A549 (cell line): ENCODE measurements at regions of chr11 and their contacts with region 1.

Region 1: GRCh38 chr11:36478700-36479329 is 31.3 kb downstream of the TRAF6 start:
- DNase-seq: peak; percentile 35 to 60
- ATAC-seq: peak; percentile 91 to 92
- H3K4me3 ChIP-seq: no peak overlapping the region
- H3K27ac ChIP-seq: no peak overlapping the region
- H3K4me1 ChIP-seq: no peaks in the 10 kb centered on the region
- CTCF ChIP-seq: peak; percentile 79
- EP300 ChIP-seq: no peak
- POLR2A ChIP-seq: no peak
- RAD21 ChIP-seq: peak; percentile 91

Region 2: GRCh38 chr11:36131721-36132397 is 347.0 kb before region 1 on chr11:
- CTCF ChIA-PET with region 1: interaction called, 10 read pairs
- POLR2A ChIA-PET with region 1: no interaction called
- DNase-seq: peak in 1 of 2 experiments; percentile 41
- ATAC-seq: peak; percentile 70 to 86; a peak in 3 of 6 replicates
- H3K4me3 ChIP-seq: no peak overlapping the region
- H3K27ac ChIP-seq: no peak overlapping the region
- H3K4me1 ChIP-seq: peaks cover 4% of the 10 kb centered on the region; the same call in 1 of the 3 replicates
- CTCF ChIP-seq: peak; percentile 71
- EP300 ChIP-seq: no peak
- POLR2A ChIP-seq: no peak
- RAD21 ChIP-seq: peak; percentile 66 to 72

Region 3: GRCh38 chr11:36265793-36266628 is 212.8 kb before region 1 on chr11:
- CTCF ChIA-PET with region 1: interaction called, 21 read pairs
- POLR2A ChIA-PET with region 1: interaction called, 4 read pairs
- DNase-seq: peak; percentile 55 to 62
- ATAC-seq: peak; percentile 75 to 93
- H3K4me3 ChIP-seq: no peak overlapping the region
- H3K27ac ChIP-seq: no peak overlapping the region
- H3K4me1 ChIP-seq: no peaks in the 10 kb centered on the region
- CTCF ChIP-seq: peak; percentile 86
- EP300 ChIP-seq: no peak
- POLR2A ChIP-seq: no peak
- RAD21 ChIP-seq: peak; percentile 93

Region 4: DNA sequence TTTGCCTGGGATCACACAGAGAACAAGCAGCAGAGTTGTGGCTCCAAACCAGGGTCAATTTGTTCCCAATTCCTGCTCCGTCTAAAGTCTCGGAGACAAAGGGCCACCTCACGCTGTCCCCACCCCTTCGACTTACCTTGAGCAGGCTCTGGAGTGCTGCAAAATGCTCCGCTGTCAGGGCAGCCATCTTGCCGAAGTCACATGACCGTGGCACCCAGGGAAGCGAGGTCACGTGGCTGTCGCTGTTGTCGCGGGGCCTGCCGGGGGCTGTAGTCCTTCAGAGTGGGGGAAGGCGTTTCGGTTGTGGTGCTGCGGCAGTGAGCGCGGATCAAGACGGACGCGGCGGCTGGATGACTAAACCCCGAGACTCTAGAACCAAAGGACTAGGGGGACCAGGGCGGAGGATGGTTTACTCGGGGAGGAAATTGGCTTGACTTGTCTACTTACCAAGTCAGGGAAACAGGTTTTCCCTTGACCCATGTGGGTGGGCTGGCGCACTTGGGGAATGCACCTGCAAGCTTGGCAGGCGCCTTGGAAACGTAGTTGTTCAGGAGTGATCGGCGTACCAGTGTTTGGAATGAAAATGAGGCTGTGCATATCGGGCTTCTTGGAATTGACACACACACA is 189.5 kb before region 1 on chr11 and contains the start of gene COMMD9:
- CTCF ChIA-PET with region 1: interaction called, 182 read pairs
- POLR2A ChIA-PET with region 1: interaction called, 7 read pairs
- DNase-seq: peak; percentile 94
- ATAC-seq: peak; percentile 96 to 99
- H3K4me3 ChIP-seq: peak within 1 kb of the TSS; percentile 98
- H3K27ac ChIP-seq: peak within 1 kb of the TSS; percentile 70 to 85
- H3K4me1 ChIP-seq: peaks cover 6% of the 10 kb centered on the region; the same call in 1 of the 3 replicates
- CTCF ChIP-seq: no peak
- EP300 ChIP-seq: no peak
- POLR2A ChIP-seq: peak; percentile 48
- RAD21 ChIP-seq: no peak
- polyA plus RNA-seq, gene COMMD9: 37.3 and 44.3 TPM in 2 replicates

Region 5: DNA sequence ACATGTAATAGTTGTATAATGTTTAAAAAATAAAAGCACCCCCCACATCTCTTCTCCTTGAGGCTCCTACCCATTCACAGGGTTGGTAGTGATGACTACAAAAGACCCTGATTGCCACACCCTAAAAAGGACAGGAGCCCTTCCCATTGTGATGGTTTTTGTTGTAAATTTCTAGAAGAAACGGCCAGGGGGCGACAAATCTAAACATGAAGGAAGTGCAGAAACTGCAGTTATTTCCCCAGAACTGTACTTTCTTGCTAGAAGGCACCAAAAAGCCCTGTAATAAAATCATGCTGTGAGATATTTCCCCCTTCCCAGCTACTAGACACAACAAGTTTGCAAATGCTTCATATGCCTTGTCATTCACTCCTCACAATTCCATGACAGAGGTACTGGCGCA is 171.9 kb before region 1 on chr11:
- CTCF ChIA-PET with region 1: interaction called, 24 read pairs
- POLR2A ChIA-PET with region 1: no interaction called
- DNase-seq: peak in 1 of 2 experiments; percentile 33
- ATAC-seq: peak in 1 of 2 experiments; percentile 56; a peak in 3 of 6 replicates
- H3K4me3 ChIP-seq: no peak overlapping the region
- H3K27ac ChIP-seq: no peak overlapping the region
- H3K4me1 ChIP-seq: peaks cover 26% of the 10 kb centered on the region
- CTCF ChIP-seq: peak; percentile 43; the same call in 2 of the 3 replicates
- EP300 ChIP-seq: no peak
- POLR2A ChIP-seq: no peak
- RAD21 ChIP-seq: peak; percentile 49 to 54

Region 6: DNA sequence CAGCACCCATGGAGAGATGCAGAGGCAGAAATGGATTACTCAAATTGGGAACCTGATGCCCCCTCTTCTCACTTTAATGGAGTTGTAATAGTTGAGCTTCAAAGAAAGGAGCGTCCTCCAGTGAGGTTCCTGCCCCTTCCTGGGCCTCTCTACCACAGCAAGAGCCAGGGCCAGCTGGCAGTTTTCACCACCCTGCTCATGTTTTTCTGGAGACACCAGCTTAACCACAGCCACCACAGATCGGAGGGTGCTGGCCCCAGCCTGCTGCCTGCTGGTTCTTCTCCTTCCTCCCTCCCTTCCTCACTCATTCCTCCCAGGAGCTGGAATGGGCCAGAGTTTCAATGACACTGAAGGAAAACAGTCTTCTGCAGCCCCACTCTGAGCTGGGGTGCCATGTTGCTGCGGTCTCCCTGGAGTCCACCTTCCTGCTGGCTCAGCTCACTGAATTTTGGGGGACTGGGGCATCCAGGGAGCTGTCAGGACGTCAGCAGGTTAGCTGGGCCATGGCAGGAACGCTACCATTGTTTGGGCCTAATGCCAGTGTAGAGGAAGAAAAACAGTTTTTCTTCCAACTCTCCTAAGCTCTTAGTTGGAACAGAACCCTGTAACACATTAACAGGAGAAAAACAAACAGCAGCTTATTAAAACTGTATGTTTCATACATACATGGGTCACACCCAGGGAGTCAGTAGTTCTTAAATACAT is 26.4 kb before region 1 on chr11:
- CTCF ChIA-PET with region 1: interaction called, 12 read pairs
- POLR2A ChIA-PET with region 1: no interaction called
- DNase-seq: no peak
- ATAC-seq: no peak
- H3K4me3 ChIP-seq: no peak overlapping the region
- H3K27ac ChIP-seq: peak overlapping the region; percentile 38 to 79; a peak in 4 of 6 replicates
- H3K4me1 ChIP-seq: peaks cover 44% of the 10 kb centered on the region
- CTCF ChIP-seq: no peak
- EP300 ChIP-seq: no peak
- POLR2A ChIP-seq: no peak
- RAD21 ChIP-seq: no peak

Region 7: GRCh38 chr11:36492724-36493304 is 14.0 kb after region 1 on chr11:
- CTCF ChIA-PET with region 1: interaction called, 37 read pairs
- POLR2A ChIA-PET with region 1: no interaction called
- DNase-seq: peak; percentile 48 to 68
- ATAC-seq: peak; percentile 67 to 77; a peak in 5 of 6 replicates
- H3K4me3 ChIP-seq: no peak overlapping the region
- H3K27ac ChIP-seq: no peak overlapping the region
- H3K4me1 ChIP-seq: no peaks in the 10 kb centered on the region
- CTCF ChIP-seq: peak; percentile 89
- EP300 ChIP-seq: no peak
- POLR2A ChIP-seq: no peak
- RAD21 ChIP-seq: peak; percentile 73 to 81

Region 8: DNA sequence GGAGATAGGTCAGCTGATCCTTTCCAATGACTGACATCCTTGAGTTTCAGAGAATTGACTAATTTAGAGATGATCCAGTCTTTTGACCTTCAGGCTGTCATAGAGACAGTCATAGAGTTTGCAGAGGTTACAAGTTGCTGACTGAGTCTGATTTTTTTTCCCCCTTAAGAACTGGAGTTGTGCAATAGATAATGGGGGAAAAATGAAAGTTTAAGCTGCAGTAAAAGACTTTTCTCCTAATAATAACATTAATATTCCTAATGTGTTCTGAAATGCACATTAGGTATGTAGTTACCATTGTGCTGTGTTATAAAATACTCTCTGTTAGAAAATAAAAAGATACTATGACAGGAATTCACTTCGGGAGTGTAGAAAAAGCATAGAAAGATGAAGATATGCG is 996.1 kb after region 1 on chr11:
- CTCF ChIA-PET with region 1: no interaction called
- POLR2A ChIA-PET with region 1: no interaction called
- DNase-seq: no peak
- ATAC-seq: no peak
- H3K4me3 ChIP-seq: no peak overlapping the region
- H3K27ac ChIP-seq: no peak overlapping the region
- H3K4me1 ChIP-seq: no peaks in the 10 kb centered on the region
- CTCF ChIP-seq: no peak
- EP300 ChIP-seq: no peak
- POLR2A ChIP-seq: no peak
- RAD21 ChIP-seq: no peak